SK-N-SH (cell line): ENCODE measurements at regions of chr5 and their contacts with region 1.

Region 1: DNA sequence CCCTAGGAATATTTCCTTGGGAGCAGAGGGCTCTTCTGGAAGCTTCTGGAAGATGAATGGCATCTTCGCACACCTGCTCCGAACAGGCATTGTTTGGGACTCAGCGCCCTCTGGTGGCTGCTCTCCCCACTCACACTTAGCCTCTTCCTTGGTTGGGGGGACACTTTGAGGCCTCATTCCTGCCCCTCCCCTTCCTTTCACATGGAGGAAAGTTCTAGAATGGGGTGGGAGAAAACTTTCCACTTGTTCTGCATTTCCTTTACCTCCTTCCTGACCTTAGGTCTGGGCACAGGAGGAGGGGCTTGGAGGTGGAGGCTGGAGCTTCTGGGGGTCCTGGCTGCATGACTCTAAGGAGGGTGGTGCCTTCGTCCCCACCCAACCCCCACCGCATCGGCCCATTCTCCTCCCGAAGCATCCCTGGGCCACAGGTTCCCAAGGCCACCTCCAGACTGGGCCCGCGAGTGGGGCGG is 19.3 kb upstream of the SMIM32 start:
- DNase-seq: peak; percentile 81
- H3K4me3 ChIP-seq: no peak overlapping the region; a peak in 1 of 4 replicates
- H3K27ac ChIP-seq: no peak overlapping the region
- H3K4me1 ChIP-seq: no peaks in the 10 kb centered on the region
- H3K27me3 ChIP-seq: no peaks in the 10 kb centered on the region
- CTCF ChIP-seq: peak; percentile 94
- EP300 ChIP-seq: no peak; a peak in 1 of 4 replicates
- RAD21 ChIP-seq: peak; percentile 83

Region 2: DNA sequence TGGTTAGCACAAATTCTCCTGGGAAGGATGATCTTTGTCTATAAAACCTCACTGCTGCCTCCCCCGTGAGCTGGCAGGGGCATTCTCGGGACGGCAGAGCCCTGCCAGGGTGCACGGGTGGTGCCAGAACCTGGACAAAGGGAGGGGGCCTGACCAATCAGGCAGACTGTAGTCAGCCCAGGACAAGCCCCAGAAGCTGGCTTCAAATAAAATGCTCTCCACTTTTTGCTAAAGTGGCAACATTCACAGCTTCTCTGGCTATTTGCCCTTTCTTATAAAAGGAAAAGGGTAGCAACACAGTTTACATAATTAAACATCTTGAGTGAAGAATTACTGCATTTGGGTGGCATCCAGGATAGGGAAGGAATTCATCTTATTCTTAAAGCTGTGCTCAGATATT is 331.0 kb before region 1 on chr5:
- CTCF ChIA-PET with region 1: interaction called, 22 read pairs
- POLR2A ChIA-PET with region 1: no interaction called
- DNase-seq: no peak
- H3K4me3 ChIP-seq: no peak overlapping the region
- H3K27ac ChIP-seq: no peak overlapping the region
- H3K4me1 ChIP-seq: peaks cover 0 to 12% of the 10 kb centered on the region in 2 experiments; a peak in 1 of 4 replicates
- H3K27me3 ChIP-seq: no peaks in the 10 kb centered on the region
- CTCF ChIP-seq: no peak
- EP300 ChIP-seq: no peak
- RAD21 ChIP-seq: no peak

Region 3: GRCh38 chr5:135937245-135937915 is 274.9 kb before region 1 on chr5:
- CTCF ChIA-PET with region 1: interaction called, 19 read pairs
- POLR2A ChIA-PET with region 1: no interaction called
- DNase-seq: no peak
- H3K4me3 ChIP-seq: no peak overlapping the region
- H3K27ac ChIP-seq: no peak overlapping the region
- H3K4me1 ChIP-seq: no peaks in the 10 kb centered on the region; a peak in 1 of 4 replicates
- H3K27me3 ChIP-seq: no peaks in the 10 kb centered on the region
- CTCF ChIP-seq: no peak
- EP300 ChIP-seq: no peak
- RAD21 ChIP-seq: no peak

Region 4: DNA sequence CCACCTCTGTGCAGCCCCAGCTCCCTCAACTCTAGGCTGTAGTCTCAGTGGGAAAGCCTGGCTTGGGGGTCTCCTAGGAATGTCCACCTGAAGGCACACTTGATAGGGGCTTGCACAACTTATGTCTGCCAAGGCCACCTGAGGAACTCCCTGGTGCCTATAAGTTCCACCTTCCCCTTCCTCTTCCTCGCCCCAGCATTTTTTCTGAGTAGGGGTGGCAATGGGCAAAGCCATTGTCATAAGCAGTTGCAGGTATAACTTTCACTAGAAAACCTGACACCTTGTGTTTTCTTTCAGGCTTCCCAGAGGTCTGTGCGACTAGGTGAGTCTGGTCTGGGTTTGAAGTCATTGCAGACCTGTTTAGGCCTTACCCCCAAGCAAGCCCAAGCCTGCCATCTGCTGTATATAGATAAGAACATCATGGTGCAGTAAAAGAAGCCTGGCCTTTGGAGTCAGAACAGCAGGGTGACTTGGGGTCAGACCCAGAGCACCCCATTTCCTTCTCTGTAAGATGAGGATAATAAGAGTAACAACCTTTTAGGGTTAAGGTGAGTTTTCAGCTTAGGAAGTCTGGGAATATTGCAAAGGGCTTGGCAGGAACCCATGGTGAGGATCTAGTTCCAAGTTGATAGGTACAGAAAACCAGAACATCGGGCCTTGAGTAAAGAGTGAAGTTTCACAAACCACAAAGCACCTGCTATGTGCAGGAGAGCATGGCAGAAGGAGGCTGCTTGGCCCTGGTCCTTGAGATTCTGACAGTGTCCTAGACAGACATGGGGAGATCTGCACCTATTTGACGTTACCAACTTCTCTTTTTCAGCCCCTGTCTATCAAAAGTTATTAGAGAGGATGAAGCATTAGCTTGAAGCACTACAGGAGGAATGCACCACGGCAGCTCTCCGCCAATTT is 149.7 kb before region 1 on chr5:
- CTCF ChIA-PET with region 1: interaction called, 18 read pairs
- POLR2A ChIA-PET with region 1: no interaction called
- DNase-seq: no peak
- H3K4me3 ChIP-seq: no peak overlapping the region
- H3K27ac ChIP-seq: peak overlapping the region in 1 of 2 experiments; percentile 17; a peak in 1 of 4 replicates
- H3K4me1 ChIP-seq: peaks cover 7 to 12% of the 10 kb centered on the region in 2 experiments; a peak in 3 of 4 replicates
- H3K27me3 ChIP-seq: no peaks in the 10 kb centered on the region
- CTCF ChIP-seq: peak; percentile 60
- EP300 ChIP-seq: no peak
- RAD21 ChIP-seq: peak; percentile 74

Region 5: GRCh38 chr5:136137497-136138220 is 74.6 kb before region 1 on chr5:
- CTCF ChIA-PET with region 1: interaction called, 12 read pairs
- POLR2A ChIA-PET with region 1: no interaction called
- DNase-seq: no peak
- H3K4me3 ChIP-seq: no peak overlapping the region
- H3K27ac ChIP-seq: no peak overlapping the region; a peak in 1 of 4 replicates
- H3K4me1 ChIP-seq: peaks cover 0 to 14% of the 10 kb centered on the region in 2 experiments; a peak in 2 of 4 replicates
- H3K27me3 ChIP-seq: no peaks in the 10 kb centered on the region
- CTCF ChIP-seq: no peak
- EP300 ChIP-seq: no peak
- RAD21 ChIP-seq: no peak

Region 6: GRCh38 chr5:136192526-136193321 is 19.6 kb before region 1 on chr5 and contains the start of gene SMIM32:
- CTCF ChIA-PET with region 1: interaction called, 109 read pairs
- POLR2A ChIA-PET with region 1: no interaction called
- DNase-seq: peak; percentile 76
- H3K4me3 ChIP-seq: peak within 1 kb of the TSS in 1 of 2 experiments; percentile 24; a peak in 3 of 4 replicates
- H3K27ac ChIP-seq: no peak within 1 kb of the TSS
- H3K4me1 ChIP-seq: peaks cover 0 to 6% of the 10 kb centered on the region in 2 experiments; a peak in 1 of 4 replicates
- H3K27me3 ChIP-seq: peaks cover 24% of the 10 kb centered on the region; the same call in 1 of the 2 replicates
- CTCF ChIP-seq: no peak
- EP300 ChIP-seq: no peak
- RAD21 ChIP-seq: no peak
- polyA plus RNA-seq, gene SMIM32: 0.11 and 0.25 TPM in 2 replicates

Region 7: DNA sequence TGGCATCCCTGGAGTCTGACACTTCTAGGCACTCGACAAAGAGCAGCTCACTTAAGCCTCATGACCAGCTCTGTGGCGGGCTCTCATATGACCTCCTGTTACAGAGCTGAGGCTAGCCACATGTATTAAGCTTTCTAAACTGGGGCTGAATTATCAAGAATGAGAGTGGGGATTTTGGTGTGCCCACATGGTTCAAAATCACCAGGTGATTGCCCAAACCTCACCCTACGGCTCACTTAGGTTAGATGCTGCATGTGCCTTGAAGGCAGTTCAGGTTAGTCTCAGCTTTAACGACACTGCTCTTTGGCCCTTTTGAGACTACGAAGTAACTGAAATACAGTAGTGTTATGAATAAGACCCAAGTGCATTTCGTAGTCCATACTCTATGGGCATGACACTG is 20.0 kb after region 1 on chr5:
- CTCF ChIA-PET with region 1: interaction called, 57 read pairs
- POLR2A ChIA-PET with region 1: no interaction called
- DNase-seq: no peak
- H3K4me3 ChIP-seq: no peak overlapping the region
- H3K27ac ChIP-seq: no peak overlapping the region
- H3K4me1 ChIP-seq: peaks cover 0 to 13% of the 10 kb centered on the region in 2 experiments; a peak in 2 of 4 replicates
- H3K27me3 ChIP-seq: peaks cover 8% of the 10 kb centered on the region; the same call in 1 of the 2 replicates
- CTCF ChIP-seq: no peak
- EP300 ChIP-seq: no peak
- RAD21 ChIP-seq: no peak

Region 8: DNA sequence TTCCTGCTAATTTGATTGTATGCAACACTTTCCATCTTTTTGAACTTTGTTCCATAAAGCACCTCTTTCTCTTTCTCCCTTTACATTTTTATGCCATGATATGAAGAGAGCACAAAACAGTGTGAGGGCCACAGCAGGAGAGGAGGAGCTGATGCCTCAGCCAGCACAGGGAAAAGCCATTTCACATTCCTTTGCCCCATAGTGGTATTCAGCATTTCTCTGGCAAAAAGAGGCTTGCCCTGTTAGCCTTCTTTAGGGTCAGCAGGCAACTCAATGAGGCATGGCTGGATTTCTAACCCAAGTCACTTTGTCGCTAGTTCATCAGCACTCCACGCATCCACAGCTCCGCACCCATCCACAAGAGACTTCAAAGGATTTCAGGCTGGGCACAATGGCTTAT is 176.2 kb after region 1 on chr5:
- CTCF ChIA-PET with region 1: no interaction called
- POLR2A ChIA-PET with region 1: no interaction called
- DNase-seq: no peak
- H3K4me3 ChIP-seq: no peak overlapping the region
- H3K27ac ChIP-seq: no peak overlapping the region
- H3K4me1 ChIP-seq: no peaks in the 10 kb centered on the region
- H3K27me3 ChIP-seq: no peaks in the 10 kb centered on the region
- CTCF ChIP-seq: no peak
- EP300 ChIP-seq: no peak
- RAD21 ChIP-seq: no peak